ENCODE measurements at regions of chr2 and their contacts with region 1.

Region 1: GRCh38 chr2:42964439-42965083 is 172.2 kb upstream of the HAAO start:
- H3K4me3 Mint-ChIP-seq: no peak overlapping the region
- H3K27ac Mint-ChIP-seq: peak overlapping the region; percentile 45
- H3K4me1 Mint-ChIP-seq: peaks cover 69% of the 10 kb centered on the region
- H3K27me3 Mint-ChIP-seq: peaks cover 32% of the 10 kb centered on the region

Region 2: DNA sequence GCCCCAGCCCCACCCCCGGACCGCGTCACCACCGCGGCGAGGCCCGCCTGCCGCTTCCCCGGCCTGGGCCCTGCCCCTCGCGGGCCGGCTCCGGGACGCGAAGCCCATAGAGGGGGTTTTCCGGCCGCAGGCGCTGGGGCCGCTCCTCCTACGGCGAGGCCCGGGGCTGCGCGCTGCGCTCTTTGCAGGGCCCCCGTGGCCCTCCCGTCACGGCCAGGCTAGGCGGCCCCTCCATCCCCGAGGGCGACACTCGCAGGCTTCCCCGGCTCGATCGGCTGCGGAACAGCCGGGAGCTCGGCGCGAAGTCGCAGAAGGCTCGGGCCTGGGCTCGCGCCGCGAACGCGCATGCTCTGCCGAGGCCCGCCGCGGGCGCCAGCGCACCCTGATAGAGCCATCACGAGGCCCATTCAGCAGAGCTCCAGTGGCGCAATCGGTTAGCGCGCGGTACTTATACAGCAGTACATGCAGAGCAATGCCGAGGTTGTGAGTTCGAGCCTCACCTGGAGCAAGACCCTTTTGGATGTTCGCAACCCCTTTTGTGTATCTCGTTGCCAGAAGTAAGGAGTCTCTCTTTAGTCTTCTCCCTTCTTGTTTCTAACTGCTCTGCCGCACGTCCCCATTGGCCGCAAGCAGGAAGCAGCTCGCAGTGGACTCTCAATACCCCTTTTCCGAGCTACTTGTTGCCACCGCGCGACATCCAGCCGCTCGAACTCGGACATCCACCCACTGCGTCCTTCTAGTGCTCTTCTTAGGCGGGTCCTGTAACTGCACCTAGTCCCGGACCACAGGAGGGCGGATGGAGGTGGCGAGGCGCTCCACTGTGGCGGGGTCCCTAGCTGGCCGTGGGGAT is 154.2 kb before region 1 on chr2:
- intact Hi-C with region 1: no loop called
- H3K4me3 Mint-ChIP-seq: peak overlapping the region; percentile 80
- H3K27ac Mint-ChIP-seq: peak overlapping the region; percentile 99
- H3K4me1 Mint-ChIP-seq: peaks cover 46% of the 10 kb centered on the region
- H3K27me3 Mint-ChIP-seq: no peaks in the 10 kb centered on the region

Region 3: GRCh38 chr2:43559391-43560230 is 595.0 kb after region 1 on chr2:
- intact Hi-C with region 1: loop called (anchors 10 kb)
- H3K4me3 Mint-ChIP-seq: no peak overlapping the region
- H3K27ac Mint-ChIP-seq: no peak overlapping the region
- H3K4me1 Mint-ChIP-seq: no peaks in the 10 kb centered on the region
- H3K27me3 Mint-ChIP-seq: no peaks in the 10 kb centered on the region

Measured in dendritic cell treated with granulocyte-macrophage colony-stimulating factor and Interleukin-4, amounts not matched to agents 40 ng/mL and 50 ng/mL, for 4 days (primary cell).